ENCODE measurements at regions of chr5 and their contacts with region 1.

Region 1: DNA sequence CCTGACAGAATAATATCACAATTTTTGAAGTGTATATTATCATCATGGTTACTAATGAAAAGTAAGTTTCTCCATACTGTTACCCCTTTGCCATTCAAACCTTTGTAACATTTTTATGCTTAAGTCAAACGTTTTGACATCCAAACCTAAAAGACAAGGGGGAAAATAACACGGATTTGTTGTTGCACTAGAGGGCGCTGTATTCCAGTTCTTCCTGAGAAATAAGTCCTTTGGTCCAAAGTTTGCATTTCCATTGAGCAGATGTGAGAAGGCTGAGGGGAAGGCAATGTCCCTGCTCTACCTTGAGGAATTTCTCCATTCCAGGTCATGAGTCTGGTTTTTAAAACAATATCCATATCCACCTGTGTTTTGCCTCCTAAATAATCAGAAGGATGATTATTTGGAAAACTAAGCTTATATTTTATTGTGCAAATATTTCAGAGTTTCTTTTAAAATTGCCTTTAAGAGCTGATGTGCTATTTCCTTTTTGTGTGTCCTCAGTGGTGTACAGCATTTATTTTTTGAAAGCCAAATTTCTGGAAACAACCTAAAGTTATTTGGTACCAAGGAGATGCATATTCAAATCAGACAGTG is 9.7 kb downstream of the LECT2 start:
- DNase-seq: peak in 4 of 5 donors; percentile 28 to 56 (median 41)
- ATAC-seq: peak in 3 of 4 donors; percentile 46 to 59 (median 58)
- H3K4me3 ChIP-seq: no peak overlapping the region
- H3K27ac ChIP-seq: no peak overlapping the region
- H3K4me1 ChIP-seq: no peaks in the 10 kb centered on the region
- H3K27me3 ChIP-seq: peaks cover 0 to 11% (median 0%) of the 10 kb centered on the region in 9 donors
- CTCF ChIP-seq: peak; percentile 61 to 87 (median 80)
- POLR2A ChIP-seq: no peak

Region 2: GRCh38 chr5:136202469-136203205 is 257.6 kb after region 1 on chr5:
- intact Hi-C with region 1: loop called in 1 of 10 experiments (anchors 10 kb)
- DNase-seq: no peak
- ATAC-seq: no peak
- H3K4me3 ChIP-seq: no peak overlapping the region
- H3K27ac ChIP-seq: no peak overlapping the region
- H3K4me1 ChIP-seq: no peaks in the 10 kb centered on the region
- H3K27me3 ChIP-seq: peaks cover 0 to 17% (median 0%) of the 10 kb centered on the region in 9 donors
- CTCF ChIP-seq: no peak
- POLR2A ChIP-seq: no peak

Region 3: DNA sequence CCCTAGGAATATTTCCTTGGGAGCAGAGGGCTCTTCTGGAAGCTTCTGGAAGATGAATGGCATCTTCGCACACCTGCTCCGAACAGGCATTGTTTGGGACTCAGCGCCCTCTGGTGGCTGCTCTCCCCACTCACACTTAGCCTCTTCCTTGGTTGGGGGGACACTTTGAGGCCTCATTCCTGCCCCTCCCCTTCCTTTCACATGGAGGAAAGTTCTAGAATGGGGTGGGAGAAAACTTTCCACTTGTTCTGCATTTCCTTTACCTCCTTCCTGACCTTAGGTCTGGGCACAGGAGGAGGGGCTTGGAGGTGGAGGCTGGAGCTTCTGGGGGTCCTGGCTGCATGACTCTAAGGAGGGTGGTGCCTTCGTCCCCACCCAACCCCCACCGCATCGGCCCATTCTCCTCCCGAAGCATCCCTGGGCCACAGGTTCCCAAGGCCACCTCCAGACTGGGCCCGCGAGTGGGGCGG is 267.2 kb after region 1 on chr5:
- intact Hi-C with region 1: loop called in 9 of 10 experiments (anchors 2 to 10 kb)
- DNase-seq: peak; percentile 41 to 76 (median 60)
- ATAC-seq: peak in 2 of 4 donors; percentile 56 to 77
- H3K4me3 ChIP-seq: no peak overlapping the region
- H3K27ac ChIP-seq: no peak overlapping the region
- H3K4me1 ChIP-seq: no peaks in the 10 kb centered on the region
- H3K27me3 ChIP-seq: peaks cover 0 to 40% (median 9%) of the 10 kb centered on the region in 9 donors
- CTCF ChIP-seq: peak; percentile 73 to 96 (median 84)
- POLR2A ChIP-seq: no peak

Measured in heart left ventricle (tissue), 16 donors.